Left lung (tissue), 14 donors: ENCODE measurements at regions of chr2 and their contacts with region 1.

Region 1: DNA sequence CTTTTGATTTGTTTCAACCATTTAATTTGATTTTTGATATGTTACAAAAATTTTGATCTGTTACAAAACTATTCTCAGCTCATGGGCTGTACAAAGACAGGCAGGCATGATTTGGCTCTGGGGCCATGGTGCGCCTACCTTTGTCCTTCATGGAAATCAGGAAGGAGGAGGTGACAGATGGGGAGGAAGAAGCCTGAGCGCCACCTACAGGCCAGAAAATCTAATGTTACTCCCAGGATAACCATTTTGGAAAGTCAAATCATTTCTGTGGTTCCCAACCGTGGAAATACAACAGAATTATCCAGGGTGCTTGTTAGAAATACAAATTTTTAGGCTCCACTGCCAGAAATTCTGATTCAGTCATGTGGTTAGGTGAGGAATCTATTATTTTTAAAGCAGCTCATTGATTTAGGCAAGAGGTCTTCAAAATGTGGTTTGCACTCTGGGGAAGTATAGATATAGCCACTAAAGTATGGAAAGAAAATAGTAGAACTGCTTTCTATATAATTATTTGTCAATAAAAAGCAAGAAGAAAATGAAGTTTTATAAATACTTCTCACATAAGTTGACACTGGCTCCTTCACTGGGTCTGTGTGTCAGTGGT is 93.9 kb downstream of the EVA1A start:
- DNase-seq: peak in 1 of 4 donors; percentile 30
- ATAC-seq: peak; percentile 61
- H3K4me3 ChIP-seq: no peak overlapping the region
- H3K27ac ChIP-seq: no peak overlapping the region
- H3K4me1 ChIP-seq: no peaks in the 10 kb centered on the region
- H3K27me3 ChIP-seq: peaks cover 0 to 18% of the 10 kb centered on the region in 2 donors
- CTCF ChIP-seq: peak; percentile 29 to 38

Region 2: DNA sequence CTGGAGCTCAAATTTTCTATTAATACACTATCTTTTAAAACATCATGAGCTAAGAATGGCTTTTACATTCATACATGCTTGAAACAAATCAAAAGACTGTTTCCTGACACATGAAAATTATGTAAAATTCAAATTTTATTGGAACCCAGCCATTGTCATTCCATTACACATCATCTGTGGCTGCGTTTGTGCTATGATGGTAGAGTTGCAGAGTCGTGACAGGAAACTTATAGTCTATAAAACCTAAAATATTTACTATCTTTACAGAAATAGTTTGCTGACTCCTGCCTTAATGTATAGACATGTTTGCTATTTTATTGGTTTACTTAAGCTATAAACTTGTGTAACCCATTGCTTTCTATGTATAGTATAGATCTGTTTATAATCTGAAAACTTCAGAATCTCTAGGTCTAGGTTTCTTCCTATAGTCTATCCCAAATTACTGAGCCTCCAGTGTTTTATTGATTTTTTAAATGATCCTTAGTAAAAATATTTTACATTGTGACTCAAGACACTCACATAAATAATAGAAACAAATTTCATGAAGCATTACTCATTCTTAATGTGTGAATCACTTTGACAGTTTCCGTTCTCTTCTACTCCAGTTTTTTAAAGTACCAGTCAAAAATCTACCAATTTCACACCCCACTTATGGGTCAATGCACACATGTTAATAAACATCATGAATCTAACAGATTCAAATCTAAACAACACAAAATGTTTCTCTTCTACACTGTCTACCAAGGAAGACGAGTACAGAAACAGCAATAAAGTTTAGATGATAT is 153.3 kb after region 1 on chr2:
- intact Hi-C with region 1: loop called in 1 of 2 experiments (anchors 10 kb)
- DNase-seq: no peak
- ATAC-seq: no peak
- H3K4me3 ChIP-seq: no peak overlapping the region
- H3K27ac ChIP-seq: no peak overlapping the region
- H3K4me1 ChIP-seq: no peaks in the 10 kb centered on the region
- H3K27me3 ChIP-seq: no peaks in the 10 kb centered on the region
- CTCF ChIP-seq: no peak